ENCODE measurements at regions of chr12 and their contacts with region 1.

Region 1: DNA sequence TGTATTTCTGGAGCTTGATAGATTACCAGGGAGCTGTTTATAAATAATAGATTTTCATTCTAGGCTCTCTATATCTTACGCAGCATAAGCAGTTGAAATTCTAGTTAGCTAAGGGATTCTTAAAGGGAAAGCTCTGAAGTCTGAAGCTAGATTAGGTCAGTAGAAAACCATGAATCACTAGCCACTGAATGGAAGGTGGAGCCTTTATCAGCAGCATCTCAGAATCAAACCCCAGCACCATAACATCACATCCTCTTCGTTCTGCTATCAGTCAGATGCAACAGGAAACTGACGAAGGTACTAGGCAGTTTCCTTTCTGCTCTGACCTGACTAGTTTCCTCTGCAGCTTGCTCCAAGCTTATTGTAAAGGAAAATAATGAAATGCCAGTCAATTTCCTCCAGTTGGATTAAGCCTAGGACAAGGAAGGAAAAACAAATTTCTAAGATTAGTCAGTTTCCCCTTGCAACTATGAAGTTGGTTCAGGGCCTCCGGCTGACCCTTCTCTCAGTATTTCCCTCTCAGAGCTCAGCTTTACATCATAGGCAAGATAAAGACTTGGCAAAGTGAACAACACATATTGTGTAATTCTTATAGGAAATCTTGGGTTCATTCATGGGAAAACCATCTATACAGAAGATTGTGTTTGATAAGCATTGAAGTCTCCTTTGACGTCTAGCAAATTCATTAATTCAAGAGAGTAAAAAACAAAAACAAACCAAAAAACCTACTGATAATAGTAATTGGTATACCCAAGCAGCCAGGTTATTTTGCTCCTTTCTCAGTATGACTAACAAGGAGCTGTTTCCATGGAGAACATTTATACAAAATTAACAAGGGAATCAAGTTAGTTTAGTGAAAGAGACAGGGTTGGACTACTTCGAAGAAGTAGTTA is 43.4 kb upstream of the CFAP54 start:
- DNase-seq: peak; percentile 68
- H3K4me3 Mint-ChIP-seq: peak overlapping the region; percentile 28
- H3K27ac Mint-ChIP-seq: peak overlapping the region; percentile 94
- H3K4me1 Mint-ChIP-seq: peaks cover 39% of the 10 kb centered on the region
- H3K27me3 Mint-ChIP-seq: no peaks in the 10 kb centered on the region

Region 2: DNA sequence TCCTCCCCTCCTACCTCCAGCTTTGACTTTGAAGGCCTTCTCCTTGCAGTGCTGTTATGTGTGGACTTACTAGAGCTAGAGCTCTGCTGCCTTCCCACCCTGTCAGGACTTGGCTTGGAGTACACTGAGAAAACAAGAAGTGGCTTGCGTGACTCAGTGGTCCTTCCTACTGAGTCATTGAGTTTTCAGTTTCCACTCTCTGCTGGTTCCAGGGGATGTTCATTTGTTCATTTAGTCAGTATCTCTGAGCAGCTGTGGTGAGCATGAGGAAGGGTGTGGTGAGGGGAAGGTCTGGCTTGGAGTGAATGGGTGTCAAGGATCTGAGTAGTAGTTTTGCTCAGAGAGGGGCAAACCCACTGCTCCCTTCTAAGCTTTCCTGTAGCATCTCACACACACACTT is 268.9 kb before region 1 on chr12:
- CTCF ChIA-PET with region 1: no interaction called
- intact Hi-C with region 1: loop called (anchors 1 kb)
- DNase-seq: peak; percentile 91
- H3K4me3 Mint-ChIP-seq: no peak overlapping the region
- H3K27ac Mint-ChIP-seq: peak overlapping the region; percentile 82
- H3K4me1 Mint-ChIP-seq: peaks cover 17% of the 10 kb centered on the region
- H3K27me3 Mint-ChIP-seq: no peaks in the 10 kb centered on the region

Region 3: GRCh38 chr12:96258104-96258961 is 187.6 kb before region 1 on chr12:
- CTCF ChIA-PET with region 1: no interaction called
- intact Hi-C with region 1: no loop called
- DNase-seq: peak; percentile 49
- H3K4me3 Mint-ChIP-seq: no peak overlapping the region
- H3K27ac Mint-ChIP-seq: no peak overlapping the region
- H3K4me1 Mint-ChIP-seq: peaks cover 29% of the 10 kb centered on the region
- H3K27me3 Mint-ChIP-seq: no peaks in the 10 kb centered on the region

Region 4: GRCh38 chr12:96427269-96427729 is 18.6 kb before region 1 on chr12:
- CTCF ChIA-PET with region 1: interaction called, 8 read pairs
- intact Hi-C with region 1: loop called (anchors 1 kb)
- DNase-seq: peak; percentile 81
- H3K4me3 Mint-ChIP-seq: no peak overlapping the region
- H3K27ac Mint-ChIP-seq: peak overlapping the region; percentile 74
- H3K4me1 Mint-ChIP-seq: peaks cover 42% of the 10 kb centered on the region
- H3K27me3 Mint-ChIP-seq: no peaks in the 10 kb centered on the region

Region 5: GRCh38 chr12:96434107-96434506 is 11.8 kb before region 1 on chr12:
- CTCF ChIA-PET with region 1: interaction called, 5 read pairs
- intact Hi-C with region 1: loop called (anchors 1 kb)
- DNase-seq: peak; percentile 91
- H3K4me3 Mint-ChIP-seq: no peak overlapping the region
- H3K27ac Mint-ChIP-seq: peak overlapping the region; percentile 48
- H3K4me1 Mint-ChIP-seq: peaks cover 17% of the 10 kb centered on the region
- H3K27me3 Mint-ChIP-seq: no peaks in the 10 kb centered on the region

Region 6: GRCh38 chr12:96526110-96526509 is 80.2 kb after region 1 on chr12:
- CTCF ChIA-PET with region 1: no interaction called
- intact Hi-C with region 1: no loop called
- DNase-seq: peak; percentile 20
- H3K4me3 Mint-ChIP-seq: no peak overlapping the region
- H3K27ac Mint-ChIP-seq: no peak overlapping the region
- H3K4me1 Mint-ChIP-seq: peaks cover 3% of the 10 kb centered on the region
- H3K27me3 Mint-ChIP-seq: no peaks in the 10 kb centered on the region

Region 7: GRCh38 chr12:96831346-96831745 is 385.4 kb after region 1 on chr12:
- CTCF ChIA-PET with region 1: no interaction called
- intact Hi-C with region 1: no loop called
- DNase-seq: no peak
- H3K4me3 Mint-ChIP-seq: no peak overlapping the region
- H3K27ac Mint-ChIP-seq: no peak overlapping the region
- H3K4me1 Mint-ChIP-seq: no peaks in the 10 kb centered on the region
- H3K27me3 Mint-ChIP-seq: peaks cover 2% of the 10 kb centered on the region

Measured in activated naive CD4-positive, alpha-beta T cell treated with anti-CD3 and anti-CD28 coated beads for 36 hours (primary cell).